Heart right ventricle (tissue), 16 donors: ENCODE measurements at regions of chr19 and their contacts with region 1.

Region 1: DNA sequence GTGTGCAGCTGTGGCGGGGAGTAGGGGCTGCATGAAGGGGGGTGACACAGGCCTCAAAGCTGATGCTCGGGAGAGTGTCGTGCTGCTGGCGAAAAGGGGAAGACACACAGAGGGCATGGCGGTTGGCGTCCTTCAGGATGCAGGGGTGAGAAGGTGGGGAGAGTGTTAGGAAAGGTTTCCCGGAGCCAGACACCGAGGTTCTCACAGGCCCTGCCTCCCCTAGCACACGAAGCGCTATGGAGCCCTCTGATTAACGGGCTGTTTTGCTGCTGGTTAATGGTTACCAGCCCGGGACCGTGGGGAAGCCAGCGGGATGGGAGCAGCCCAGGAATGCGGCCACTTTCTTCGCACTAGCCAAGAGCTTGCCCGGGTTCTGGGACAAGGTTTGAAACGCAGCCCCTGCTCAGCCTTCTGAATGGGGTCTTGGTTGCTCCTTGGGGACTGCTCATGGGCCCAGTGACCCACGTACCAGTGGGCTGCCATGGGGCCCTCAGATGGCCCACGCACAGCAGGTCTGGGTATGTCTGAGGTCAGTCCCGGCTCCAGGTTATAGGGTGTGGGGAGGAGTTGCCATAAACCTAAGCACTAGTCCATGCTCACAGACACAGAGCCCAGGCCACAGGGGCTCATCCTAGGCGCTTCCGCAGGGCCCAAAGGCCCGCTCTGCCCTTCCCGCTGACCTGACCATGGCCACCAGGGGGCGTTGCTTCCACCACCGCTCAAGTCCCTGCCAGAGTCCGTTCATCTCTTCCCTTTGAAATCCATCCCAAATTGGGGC is 31.3 kb upstream of the ISYNA1 start:
- DNase-seq: peak; percentile 64 to 76
- ATAC-seq: peak in 7 of 8 donors; percentile 21 to 57 (median 35)
- H3K4me3 ChIP-seq: no peak overlapping the region
- H3K27ac ChIP-seq: peak overlapping the region in 2 of 10 donors; percentile 28 to 57
- H3K4me1 ChIP-seq: peaks cover 37 to 80% (median 67%) of the 10 kb centered on the region in 9 donors
- H3K27me3 ChIP-seq: no peaks in the 10 kb centered on the region
- CTCF ChIP-seq: peak; percentile 46 to 83 (median 79)

Region 2: GRCh38 chr19:18436671-18437490 is 32.4 kb before region 1 on chr19:
- intact Hi-C with region 1: no loop called
- DNase-seq: peak; percentile 84 to 91
- ATAC-seq: peak; percentile 41 to 72 (median 60)
- H3K4me3 ChIP-seq: peak overlapping the region; percentile 52 to 81 (median 60)
- H3K27ac ChIP-seq: peak overlapping the region in 9 of 10 donors; percentile 39 to 89 (median 74)
- H3K4me1 ChIP-seq: peaks cover 11 to 59% (median 38%) of the 10 kb centered on the region in 9 donors
- H3K27me3 ChIP-seq: peaks cover 0 to 23% (median 0%) of the 10 kb centered on the region in 7 donors
- CTCF ChIP-seq: peak in 4 of 9 donors; percentile 9 to 29 (median 18)

Region 3: GRCh38 chr19:18503971-18504885 is 35.0 kb after region 1 on chr19:
- intact Hi-C with region 1: loop called in 3 of 10 experiments (anchors 5 kb)
- DNase-seq: no peak
- ATAC-seq: peak in 1 of 8 donors; percentile 1
- H3K4me3 ChIP-seq: no peak overlapping the region
- H3K27ac ChIP-seq: peak overlapping the region in 9 of 10 donors; percentile 32 to 90 (median 66)
- H3K4me1 ChIP-seq: peaks cover 76 to 100% (median 100%) of the 10 kb centered on the region in 9 donors
- H3K27me3 ChIP-seq: no peaks in the 10 kb centered on the region
- CTCF ChIP-seq: no peak

Region 4: DNA sequence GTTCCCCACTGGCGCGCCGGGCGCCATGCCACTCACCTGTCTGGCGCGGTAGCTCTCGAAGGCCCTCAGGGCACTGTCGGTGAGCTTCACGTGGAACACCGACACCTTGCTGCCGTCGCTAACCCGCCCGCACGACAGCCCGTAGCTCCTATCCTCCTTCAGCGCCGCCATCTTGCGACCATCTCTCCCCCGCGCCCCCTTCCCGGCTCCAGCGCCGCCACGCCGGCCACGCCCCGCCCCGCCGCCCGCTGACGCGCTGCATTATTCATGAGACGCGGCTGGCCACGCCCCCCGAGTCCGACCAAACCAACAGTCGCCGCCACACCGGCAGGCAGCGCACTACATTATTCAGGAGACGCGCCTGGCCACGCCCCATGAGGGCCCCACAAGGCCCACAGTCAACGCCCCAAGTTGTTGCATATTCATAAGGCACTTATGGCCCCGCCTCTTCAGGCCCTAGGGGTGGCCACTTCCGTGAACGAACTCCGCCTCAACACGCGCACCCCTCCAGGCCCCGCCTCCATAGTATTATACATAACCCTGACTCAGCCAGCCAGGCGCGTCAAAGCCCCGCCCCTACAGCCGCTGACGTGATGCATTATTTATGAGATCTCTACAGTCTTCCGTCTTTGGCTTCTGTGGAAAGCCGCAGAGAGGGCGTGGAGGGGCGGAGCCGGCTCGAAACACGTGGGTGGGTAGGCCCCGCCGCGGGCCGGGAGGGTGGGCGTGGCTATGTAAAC is 52.8 kb after region 1 on chr19 and contains the start of gene ELL:
- intact Hi-C with region 1: loop called in 7 of 10 experiments (anchors 5 to 10 kb)
- DNase-seq: peak; percentile 100
- ATAC-seq: peak; percentile 92 to 96 (median 95)
- H3K4me3 ChIP-seq: peak within 1 kb of the TSS; percentile 67 to 100 (median 98)
- H3K27ac ChIP-seq: peak within 1 kb of the TSS; percentile 79 to 100 (median 95)
- H3K4me1 ChIP-seq: peaks cover 0 to 43% (median 25%) of the 10 kb centered on the region in 9 donors
- H3K27me3 ChIP-seq: no peaks in the 10 kb centered on the region
- CTCF ChIP-seq: peak in 6 of 9 donors; percentile 10 to 54 (median 34)
- total RNA-seq, gene ELL: 5.7 to 13.1 (median 7.5) TPM

Region 5: GRCh38 chr19:18571564-18572300 is 102.5 kb after region 1 on chr19 and contains the start of gene UBA52:
- intact Hi-C with region 1: loop called in 8 of 10 experiments (anchors 5 to 10 kb)
- DNase-seq: peak; percentile 97 to 98
- ATAC-seq: peak; percentile 93 to 98 (median 98)
- H3K4me3 ChIP-seq: peak within 1 kb of the TSS; percentile 58 to 99 (median 84)
- H3K27ac ChIP-seq: peak within 1 kb of the TSS; percentile 64 to 98 (median 92)
- H3K4me1 ChIP-seq: peaks cover 9 to 29% (median 19%) of the 10 kb centered on the region in 9 donors
- H3K27me3 ChIP-seq: no peaks in the 10 kb centered on the region
- CTCF ChIP-seq: no peak
- total RNA-seq, gene UBA52: 634 to 883 (median 716) TPM

Region 6: DNA sequence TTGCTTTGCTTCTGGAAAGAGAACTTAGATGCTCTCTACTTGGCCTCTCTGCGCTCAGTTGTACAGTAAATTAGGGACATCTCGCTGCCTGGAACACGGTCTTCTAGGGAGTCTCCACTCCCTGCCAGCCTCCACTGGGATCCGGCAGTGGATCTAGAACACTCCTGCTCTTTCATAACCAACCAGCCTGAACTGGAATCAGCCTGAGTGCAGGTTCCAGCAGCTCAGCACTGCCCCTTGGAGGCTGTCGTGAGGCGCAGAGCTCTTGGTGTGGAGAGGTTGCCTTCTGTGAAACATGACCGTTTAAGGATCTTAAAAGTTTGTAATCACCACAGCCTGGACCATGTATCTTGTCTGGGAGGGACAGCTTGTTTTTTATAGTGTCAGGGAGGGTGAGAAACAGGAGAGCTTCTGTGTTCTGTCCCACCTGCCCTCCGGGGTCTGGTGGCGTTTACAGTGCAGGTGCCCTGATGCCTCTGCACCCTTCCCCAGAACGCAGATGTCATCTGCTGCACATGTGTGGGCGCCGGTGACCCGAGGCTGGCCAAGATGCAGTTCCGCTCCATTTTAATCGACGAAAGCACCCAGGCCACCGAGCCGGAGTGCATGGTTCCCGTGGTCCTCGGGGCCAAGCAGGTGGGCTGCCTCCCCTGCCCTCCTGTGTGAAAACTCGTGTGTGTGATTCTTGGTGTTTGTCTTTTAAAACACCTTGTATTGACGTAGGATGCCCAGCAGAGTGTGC is 387.3 kb after region 1 on chr19:
- intact Hi-C with region 1: loop called in 1 of 10 experiments (anchors 10 kb)
- DNase-seq: no peak
- ATAC-seq: no peak
- H3K4me3 ChIP-seq: no peak overlapping the region
- H3K27ac ChIP-seq: no peak overlapping the region
- H3K4me1 ChIP-seq: peaks cover 0 to 28% (median 18%) of the 10 kb centered on the region in 9 donors
- H3K27me3 ChIP-seq: no peaks in the 10 kb centered on the region
- CTCF ChIP-seq: peak in 1 of 9 donors; percentile 25